BJ (cell line): ENCODE measurements at regions of chr12 and their contacts with region 1.

Region 1: GRCh38 chr12:26425587-26426260 is 230.4 kb downstream of the SSPN start:
- DNase-seq: no peak
- H3K4me3 ChIP-seq: no peak overlapping the region
- H3K27me3 ChIP-seq: no peaks in the 10 kb centered on the region
- CTCF ChIP-seq: no peak

Region 2: GRCh38 chr12:26465419-26466097 is 39.8 kb after region 1 on chr12:
- CTCF ChIA-PET with region 1: no interaction called
- POLR2A ChIA-PET with region 1: no interaction called
- DNase-seq: no peak
- H3K4me3 ChIP-seq: no peak overlapping the region
- H3K27me3 ChIP-seq: no peaks in the 10 kb centered on the region
- CTCF ChIP-seq: peak; percentile 13; the same call in 1 of the 2 replicates

Region 3: DNA sequence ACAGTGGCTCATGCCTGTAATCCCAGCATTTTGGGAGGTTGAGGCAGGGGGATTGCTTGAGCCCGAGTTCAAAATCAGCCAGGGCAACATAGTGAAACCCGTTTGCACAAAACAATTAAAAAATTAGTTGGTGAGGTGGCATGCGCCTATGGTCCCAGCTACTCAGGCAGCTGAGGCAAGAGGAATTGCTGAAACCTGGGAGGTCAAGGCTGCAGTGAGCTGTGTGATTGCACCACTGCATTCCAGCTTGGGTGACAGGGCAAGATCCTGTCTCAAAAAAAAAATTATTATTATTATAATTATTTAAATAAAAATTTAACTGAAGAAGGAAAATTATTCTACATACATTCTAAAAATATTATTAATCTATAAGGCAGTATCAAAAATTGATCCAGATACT is 243.1 kb after region 1 on chr12:
- CTCF ChIA-PET with region 1: no interaction called
- POLR2A ChIA-PET with region 1: interaction called, 21 read pairs
- DNase-seq: no peak
- H3K4me3 ChIP-seq: no peak overlapping the region
- H3K27me3 ChIP-seq: no peaks in the 10 kb centered on the region
- CTCF ChIP-seq: no peak